ENCODE measurements at regions of chr1 and their contacts with region 1.

Region 1: GRCh38 chr1:86380257-86380861 is 15.8 kb downstream of the ODF2L start:
- DNase-seq: peak; percentile 45
- ATAC-seq: peak; percentile 78
- H3K4me3 ChIP-seq: 0 out of 2 replicates have a peak overlapping the region, but pooled peaks have one; percentile 3
- H3K27ac ChIP-seq: 0 out of 2 replicates have a peak overlapping the region, but pooled peaks have one; percentile 6
- H3K4me1 ChIP-seq: no peaks in the 10 kb centered on the region
- H3K27me3 ChIP-seq: no peaks in the 10 kb centered on the region
- CTCF ChIP-seq: peak; percentile 64 to 84 (median 66); a peak in 5 of 6 replicates
- EP300 ChIP-seq: no peak
- POLR2A ChIP-seq: no peak
- RAD21 ChIP-seq: peak; percentile 86

Region 2: DNA sequence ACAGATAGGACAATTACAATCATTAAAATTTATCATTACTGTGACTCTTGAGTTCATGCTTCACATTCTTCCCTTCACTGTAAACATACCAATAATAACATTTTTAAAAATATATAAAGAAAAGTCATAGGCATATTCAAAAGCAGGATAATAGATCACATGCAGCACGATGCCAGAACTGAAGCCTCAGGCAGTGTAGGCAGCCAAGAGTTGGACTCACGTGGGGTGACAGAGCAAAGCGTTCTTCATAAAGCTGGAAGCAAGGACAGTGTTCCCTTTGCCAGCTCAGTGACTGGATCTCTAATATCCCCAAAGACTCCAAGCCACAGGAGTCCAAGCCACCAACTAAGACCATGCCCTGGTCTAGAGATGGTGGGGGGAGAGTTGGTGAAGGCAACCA is 61.9 kb before region 1 on chr1:
- CTCF ChIA-PET with region 1: no interaction called
- POLR2A ChIA-PET with region 1: no interaction called
- RAD21 ChIA-PET with region 1: no interaction called
- SMC1A ChIA-PET with region 1: no interaction called
- in situ Hi-C with region 1: no loop called
- intact Hi-C with region 1: no loop called
- DNase-seq: no peak
- ATAC-seq: no peak
- H3K4me3 ChIP-seq: no peak overlapping the region
- H3K27ac ChIP-seq: no peak overlapping the region
- H3K4me1 ChIP-seq: no peaks in the 10 kb centered on the region
- H3K27me3 ChIP-seq: no peaks in the 10 kb centered on the region
- CTCF ChIP-seq: no peak
- EP300 ChIP-seq: no peak
- POLR2A ChIP-seq: no peak
- RAD21 ChIP-seq: no peak

Region 3: DNA sequence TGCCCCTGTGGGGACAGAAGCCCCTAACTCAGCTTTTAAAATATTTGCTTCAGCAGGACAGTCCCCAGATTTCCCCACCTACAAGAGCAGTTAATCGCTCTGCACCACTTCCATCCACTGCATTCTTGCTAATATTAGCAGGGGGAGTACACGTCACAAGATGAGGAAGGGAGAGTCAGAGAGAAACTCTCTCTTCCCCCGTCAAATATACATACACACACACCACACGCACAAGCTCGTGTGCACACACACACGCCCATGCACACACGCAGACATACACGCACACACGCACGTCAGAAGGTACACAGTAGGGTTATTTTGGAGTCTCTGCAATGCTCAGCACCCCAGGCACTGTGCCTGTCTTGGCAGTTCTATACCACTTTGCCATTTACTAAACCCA is 90.5 kb after region 1 on chr1:
- CTCF ChIA-PET with region 1: interaction called, 22 read pairs
- POLR2A ChIA-PET with region 1: no interaction called
- RAD21 ChIA-PET with region 1: interaction called, 5 read pairs
- SMC1A ChIA-PET with region 1: interaction called, 5 read pairs
- in situ Hi-C with region 1: no loop called
- intact Hi-C with region 1: loop called (anchors 1 kb)
- DNase-seq: no peak
- ATAC-seq: peak; percentile 66
- H3K4me3 ChIP-seq: no peak overlapping the region
- H3K27ac ChIP-seq: no peak overlapping the region
- H3K4me1 ChIP-seq: peaks cover 3% of the 10 kb centered on the region; the same call in 1 of the 2 replicates
- H3K27me3 ChIP-seq: no peaks in the 10 kb centered on the region; a peak in 2 of 4 replicates
- CTCF ChIP-seq: no peak
- EP300 ChIP-seq: no peak
- POLR2A ChIP-seq: no peak
- RAD21 ChIP-seq: no peak

Region 4: GRCh38 chr1:86687595-86687994 is 307.2 kb after region 1 on chr1:
- CTCF ChIA-PET with region 1: interaction called, 3 read pairs
- POLR2A ChIA-PET with region 1: no interaction called
- RAD21 ChIA-PET with region 1: no interaction called
- SMC1A ChIA-PET with region 1: interaction called, 3 read pairs
- in situ Hi-C with region 1: no loop called
- intact Hi-C with region 1: loop called (anchors 5 kb)
- DNase-seq: no peak
- ATAC-seq: no peak
- H3K4me3 ChIP-seq: no peak overlapping the region
- H3K27ac ChIP-seq: no peak overlapping the region
- H3K4me1 ChIP-seq: no peaks in the 10 kb centered on the region
- H3K27me3 ChIP-seq: no peaks in the 10 kb centered on the region
- CTCF ChIP-seq: no peak; a peak in 1 of 6 replicates
- EP300 ChIP-seq: no peak
- POLR2A ChIP-seq: no peak
- RAD21 ChIP-seq: no peak

Region 5: DNA sequence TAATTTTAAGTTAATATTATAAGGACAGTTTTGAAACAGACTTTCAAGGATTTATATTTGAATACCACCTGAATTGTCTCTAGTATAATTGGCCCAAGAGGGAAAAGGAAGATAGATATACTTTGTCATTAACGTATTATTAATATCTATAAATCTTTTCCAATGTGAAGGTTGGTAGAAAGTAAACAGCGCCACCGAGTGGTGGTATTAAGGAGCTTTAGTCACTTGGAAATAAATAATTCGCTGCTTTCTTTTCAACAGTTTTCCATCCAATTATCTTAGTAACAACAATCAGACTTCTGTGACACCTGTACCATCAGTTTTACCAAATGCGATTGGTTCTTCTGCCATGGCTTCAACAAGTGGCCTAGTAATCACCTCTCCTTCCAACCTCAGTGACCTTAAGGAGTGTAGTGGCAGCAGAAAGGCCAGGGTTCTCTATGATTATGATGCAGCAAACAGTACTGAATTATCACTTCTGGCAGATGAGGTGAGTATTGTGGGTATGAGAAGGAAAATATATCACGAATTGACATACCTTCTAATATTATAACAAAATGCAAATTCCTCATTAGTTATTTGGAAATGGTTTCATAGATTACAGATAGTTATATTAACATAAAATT is 361.7 kb after region 1 on chr1:
- CTCF ChIA-PET with region 1: interaction called, 6 read pairs
- POLR2A ChIA-PET with region 1: interaction called, 3 read pairs
- RAD21 ChIA-PET with region 1: interaction called, 3 read pairs
- SMC1A ChIA-PET with region 1: no interaction called
- in situ Hi-C with region 1: no loop called
- intact Hi-C with region 1: loop called (anchors 5 kb)
- DNase-seq: no peak
- ATAC-seq: peak; percentile 45; the same call in 1 of the 3 replicates
- H3K4me3 ChIP-seq: no peak overlapping the region
- H3K27ac ChIP-seq: no peak overlapping the region
- H3K4me1 ChIP-seq: no peaks in the 10 kb centered on the region
- H3K27me3 ChIP-seq: no peaks in the 10 kb centered on the region
- CTCF ChIP-seq: peak; percentile 39 to 51 (median 46); a peak in 5 of 6 replicates
- EP300 ChIP-seq: no peak
- POLR2A ChIP-seq: no peak
- RAD21 ChIP-seq: peak; percentile 55

Region 6: DNA sequence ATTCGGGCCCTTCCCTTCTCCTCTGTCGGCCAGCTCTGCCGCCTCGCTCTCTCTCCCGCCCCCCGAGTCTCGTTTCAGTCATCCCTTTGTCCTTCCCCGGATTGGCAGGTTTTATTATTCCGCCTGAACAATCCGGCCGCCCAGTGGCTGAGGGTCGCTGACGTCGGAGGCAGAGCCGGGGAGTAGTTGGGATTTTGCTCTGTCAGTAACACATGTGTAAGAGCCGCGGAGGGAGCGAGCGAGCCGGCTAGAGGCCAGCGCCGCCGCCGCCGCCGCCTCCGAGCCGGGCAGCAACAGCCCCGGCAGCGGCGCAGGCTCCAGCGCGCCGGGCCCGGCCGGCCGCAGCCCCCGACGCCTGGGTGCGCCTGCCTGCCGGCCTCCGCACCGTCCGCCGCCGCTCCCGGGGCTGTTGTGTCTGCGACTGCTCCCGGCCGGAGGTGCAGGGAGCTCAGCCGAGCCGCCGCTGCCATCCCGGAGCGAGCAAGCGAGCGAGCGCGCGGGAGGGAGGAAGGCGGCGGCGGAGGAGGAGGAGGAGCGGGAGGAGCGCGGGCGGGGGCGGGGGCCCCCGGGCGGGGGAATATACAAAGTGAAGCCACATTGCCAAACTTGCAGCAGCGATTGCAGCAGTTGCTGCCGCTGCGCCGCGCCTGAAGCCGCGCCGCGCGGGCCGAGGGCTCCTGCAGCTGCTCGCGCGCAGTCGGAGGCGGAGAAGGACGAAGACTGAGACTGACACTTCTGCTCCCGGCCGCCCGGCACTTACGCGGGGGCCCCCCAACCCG is 948.1 kb after region 1 on chr1 and contains the start of gene LMO4:
- CTCF ChIA-PET with region 1: no interaction called
- POLR2A ChIA-PET with region 1: no interaction called
- RAD21 ChIA-PET with region 1: no interaction called
- SMC1A ChIA-PET with region 1: no interaction called
- in situ Hi-C with region 1: no loop called
- intact Hi-C with region 1: loop called (anchors 10 kb)
- DNase-seq: peak; percentile 81
- ATAC-seq: peak; percentile 80
- H3K4me3 ChIP-seq: peak within 1 kb of the TSS; percentile 84
- H3K27ac ChIP-seq: peak within 1 kb of the TSS; percentile 65
- H3K4me1 ChIP-seq: no peaks in the 10 kb centered on the region
- H3K27me3 ChIP-seq: no peaks in the 10 kb centered on the region; a peak in 1 of 4 replicates
- CTCF ChIP-seq: no peak
- EP300 ChIP-seq: no peak
- POLR2A ChIP-seq: peak; percentile 85
- RAD21 ChIP-seq: no peak
- polyA plus RNA-seq, gene LMO4: 3.8 to 5.7 TPM

Measured in GM12878 (cell line).